HEK293 (cell line): ENCODE measurements at regions of chr14 and their contacts with region 1.

Region 1: DNA sequence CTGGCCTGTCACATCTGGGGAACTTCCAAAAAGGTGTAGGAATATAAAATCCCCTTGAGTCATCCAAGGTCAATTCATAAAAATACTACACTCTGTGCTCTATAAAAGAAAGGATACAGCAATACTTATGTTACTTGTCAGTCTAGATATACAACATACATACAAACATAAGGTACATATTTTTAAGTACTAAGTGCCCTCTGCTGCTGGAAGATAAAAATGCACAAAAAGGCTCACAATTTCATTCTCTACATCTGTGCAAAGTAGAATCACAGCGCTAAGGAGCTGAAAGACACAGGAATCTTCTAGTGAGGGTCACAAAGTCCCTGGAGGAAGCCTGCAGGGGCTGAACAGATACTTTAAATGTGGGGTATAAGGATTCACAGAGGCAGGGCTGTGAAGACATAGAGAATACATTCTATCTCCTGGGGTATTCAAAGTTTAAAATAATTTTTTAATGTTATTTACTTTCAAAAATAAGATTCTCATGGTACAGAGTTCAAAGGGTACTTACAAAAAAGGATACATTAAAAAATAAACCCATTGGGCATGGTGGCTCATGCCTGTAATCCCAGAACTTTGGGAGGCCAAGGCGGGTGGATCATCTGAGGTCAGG is 10.2 kb upstream of the GOLGA5 start:
- H3K4me3 ChIP-seq: no peak overlapping the region
- H3K27ac ChIP-seq: no peak overlapping the region
- H3K4me1 ChIP-seq: no peaks in the 10 kb centered on the region
- CTCF ChIP-seq: peak; percentile 33; the same call in 1 of the 2 replicates

Region 2: GRCh38 chr14:92673601-92674150 is 110.2 kb before region 1 on chr14:
- CTCF ChIA-PET with region 1: no interaction called
- POLR2A ChIA-PET with region 1: no interaction called
- H3K4me3 ChIP-seq: no peak overlapping the region
- H3K27ac ChIP-seq: no peak overlapping the region
- H3K4me1 ChIP-seq: no peaks in the 10 kb centered on the region
- CTCF ChIP-seq: no peak

Region 3: GRCh38 chr14:92712654-92713051 is 71.3 kb before region 1 on chr14:
- CTCF ChIA-PET with region 1: interaction called, 76 read pairs
- POLR2A ChIA-PET with region 1: no interaction called
- H3K4me3 ChIP-seq: no peak overlapping the region
- H3K27ac ChIP-seq: no peak overlapping the region
- H3K4me1 ChIP-seq: no peaks in the 10 kb centered on the region; the same call in 1 of the 2 replicates
- CTCF ChIP-seq: no peak

Region 4: GRCh38 chr14:92719890-92720323 is 64.0 kb before region 1 on chr14:
- CTCF ChIA-PET with region 1: interaction called, 76 read pairs
- POLR2A ChIA-PET with region 1: no interaction called
- H3K4me3 ChIP-seq: no peak overlapping the region
- H3K27ac ChIP-seq: no peak overlapping the region
- H3K4me1 ChIP-seq: peaks cover 3% of the 10 kb centered on the region
- CTCF ChIP-seq: no peak

Region 5: DNA sequence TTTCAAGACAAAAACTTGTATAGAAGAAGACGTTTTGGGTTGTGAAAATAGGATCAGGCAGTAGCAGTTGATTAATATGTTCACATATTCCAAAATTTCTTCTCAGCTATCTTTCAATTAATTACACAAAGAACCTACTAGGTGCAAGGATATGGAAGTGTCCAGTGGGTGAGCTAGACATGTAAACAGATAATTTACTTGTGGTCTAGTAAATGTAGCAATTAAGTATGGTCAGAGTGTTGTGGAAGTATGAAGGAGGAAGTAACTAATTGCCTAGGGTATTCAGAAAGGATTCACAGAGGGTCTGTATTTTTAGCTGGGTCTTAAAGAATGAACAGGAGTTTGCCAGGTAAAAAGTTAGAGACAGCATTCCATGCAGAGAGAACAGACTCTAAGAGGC is 16.1 kb after region 1 on chr14:
- CTCF ChIA-PET with region 1: no interaction called
- POLR2A ChIA-PET with region 1: no interaction called
- H3K4me3 ChIP-seq: no peak overlapping the region
- H3K27ac ChIP-seq: no peak overlapping the region
- H3K4me1 ChIP-seq: peaks cover 9% of the 10 kb centered on the region; the same call in 1 of the 2 replicates
- CTCF ChIP-seq: no peak